H1 (cell line): ENCODE measurements at regions of chr4 and their contacts with region 1.

Region 1: GRCh38 chr4:142282870-142283431 is 563.1 kb downstream of the INPP4B start:
- DNase-seq: peak in 1 of 2 experiments; percentile 50
- H3K4me3 ChIP-seq: no peak overlapping the region
- H3K27ac ChIP-seq: no peak overlapping the region
- H3K4me1 ChIP-seq: no peaks in the 10 kb centered on the region
- H3K27me3 ChIP-seq: no peaks in the 10 kb centered on the region
- CTCF ChIP-seq: peak in 2 of 3 experiments; percentile 13 to 61; a peak in 2 of 4 replicates
- EP300 ChIP-seq: no peak
- POLR2A ChIP-seq: no peak
- RAD21 ChIP-seq: peak; percentile 61 to 66

Region 2: GRCh38 chr4:142142366-142143054 is 140.4 kb before region 1 on chr4:
- CTCF ChIA-PET with region 1: no interaction called
- POLR2A ChIA-PET with region 1: no interaction called
- DNase-seq: no peak
- H3K4me3 ChIP-seq: no peak overlapping the region
- H3K27ac ChIP-seq: no peak overlapping the region
- H3K4me1 ChIP-seq: no peaks in the 10 kb centered on the region
- H3K27me3 ChIP-seq: no peaks in the 10 kb centered on the region
- CTCF ChIP-seq: no peak
- EP300 ChIP-seq: no peak
- POLR2A ChIP-seq: no peak
- RAD21 ChIP-seq: no peak

Region 3: DNA sequence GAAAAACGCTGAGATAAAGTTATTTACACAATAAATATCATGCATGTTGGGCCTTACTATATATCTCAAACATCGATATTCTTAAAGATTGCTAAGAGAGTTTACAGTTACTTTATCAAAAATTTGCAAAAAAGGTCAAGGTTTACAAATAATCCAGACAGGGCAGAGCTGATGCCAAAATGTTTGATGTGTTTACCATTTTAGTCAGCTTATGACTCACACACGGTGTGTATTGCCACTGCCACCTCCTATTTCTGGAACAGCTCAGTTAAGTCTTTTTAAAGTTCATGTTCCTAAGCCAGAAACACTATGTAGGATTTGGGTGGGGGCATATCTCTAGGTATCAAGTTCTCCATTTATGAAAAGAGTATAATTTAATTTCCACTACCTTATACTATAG is 17.4 kb before region 1 on chr4:
- CTCF ChIA-PET with region 1: interaction called, 31 read pairs
- POLR2A ChIA-PET with region 1: no interaction called
- DNase-seq: no peak
- H3K4me3 ChIP-seq: no peak overlapping the region
- H3K27ac ChIP-seq: no peak overlapping the region
- H3K4me1 ChIP-seq: peaks cover 0 to 5% (median 2%) of the 10 kb centered on the region in 4 experiments; a peak in 4 of 7 replicates
- H3K27me3 ChIP-seq: no peaks in the 10 kb centered on the region
- CTCF ChIP-seq: no peak
- EP300 ChIP-seq: no peak
- POLR2A ChIP-seq: no peak
- RAD21 ChIP-seq: no peak

Region 4: GRCh38 chr4:142293536-142293935 is 10.6 kb after region 1 on chr4:
- CTCF ChIA-PET with region 1: interaction called, 30 read pairs
- POLR2A ChIA-PET with region 1: no interaction called
- DNase-seq: no peak
- H3K4me3 ChIP-seq: no peak overlapping the region
- H3K27ac ChIP-seq: no peak overlapping the region
- H3K4me1 ChIP-seq: peaks cover 0 to 4% (median 2%) of the 10 kb centered on the region in 4 experiments; a peak in 2 of 7 replicates
- H3K27me3 ChIP-seq: no peaks in the 10 kb centered on the region
- CTCF ChIP-seq: no peak
- EP300 ChIP-seq: no peak
- POLR2A ChIP-seq: no peak
- RAD21 ChIP-seq: no peak

Region 5: DNA sequence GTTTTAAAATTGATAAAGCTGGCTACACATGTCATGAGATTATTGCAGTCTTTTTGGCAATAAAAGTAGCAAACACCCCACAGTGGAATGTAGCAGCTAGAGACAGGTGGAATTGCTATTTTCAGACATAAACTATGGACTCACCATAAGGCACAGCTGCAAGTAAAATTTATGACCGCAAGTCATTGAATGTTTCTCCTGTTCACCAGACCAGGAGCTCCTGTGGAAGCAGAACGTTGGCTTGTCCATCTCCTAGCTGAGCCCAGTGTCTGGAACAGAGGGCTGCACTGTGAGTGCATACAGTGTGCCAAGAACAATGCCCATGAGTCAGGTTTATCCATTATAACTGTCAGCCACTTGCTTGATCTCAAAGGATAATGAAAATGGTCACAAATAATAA is 24.9 kb after region 1 on chr4:
- CTCF ChIA-PET with region 1: interaction called, 18 read pairs
- POLR2A ChIA-PET with region 1: no interaction called
- DNase-seq: no peak
- H3K4me3 ChIP-seq: no peak overlapping the region
- H3K27ac ChIP-seq: no peak overlapping the region
- H3K4me1 ChIP-seq: no peaks in the 10 kb centered on the region
- H3K27me3 ChIP-seq: no peaks in the 10 kb centered on the region
- CTCF ChIP-seq: no peak
- EP300 ChIP-seq: no peak
- POLR2A ChIP-seq: no peak
- RAD21 ChIP-seq: no peak

Region 6: DNA sequence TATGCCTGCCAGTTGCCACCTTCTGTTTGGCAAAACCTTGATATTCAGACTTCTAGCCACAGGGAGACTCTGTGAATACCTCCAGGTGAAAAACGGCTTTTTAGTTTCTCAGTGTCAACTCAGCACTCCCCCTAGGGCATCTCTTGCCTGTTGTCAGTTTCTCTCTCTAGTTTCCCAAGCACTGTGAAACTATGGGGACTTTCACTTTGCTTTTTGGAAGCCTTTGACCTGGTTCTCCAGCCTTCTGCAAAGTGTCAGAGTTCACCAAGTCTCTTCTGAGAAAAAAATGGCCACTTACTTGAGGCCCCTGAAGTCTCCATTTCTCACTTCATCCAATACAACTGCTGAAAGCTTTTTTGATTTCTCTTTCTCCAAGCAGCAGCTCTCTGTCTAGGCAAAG is 41.6 kb after region 1 on chr4:
- CTCF ChIA-PET with region 1: interaction called, 15 read pairs
- POLR2A ChIA-PET with region 1: no interaction called
- DNase-seq: no peak
- H3K4me3 ChIP-seq: no peak overlapping the region
- H3K27ac ChIP-seq: no peak overlapping the region
- H3K4me1 ChIP-seq: no peaks in the 10 kb centered on the region
- H3K27me3 ChIP-seq: no peaks in the 10 kb centered on the region
- CTCF ChIP-seq: no peak
- EP300 ChIP-seq: no peak
- POLR2A ChIP-seq: no peak
- RAD21 ChIP-seq: 0 out of 4 replicates have a peak, but pooled peaks of 1 of the 2 experiments have one; percentile 3

Region 7: GRCh38 chr4:142383800-142384635 is 101.1 kb after region 1 on chr4:
- CTCF ChIA-PET with region 1: no interaction called
- POLR2A ChIA-PET with region 1: no interaction called
- DNase-seq: no peak
- H3K4me3 ChIP-seq: no peak overlapping the region
- H3K27ac ChIP-seq: no peak overlapping the region
- H3K4me1 ChIP-seq: peaks cover 0 to 5% (median 0%) of the 10 kb centered on the region in 4 experiments; a peak in 1 of 7 replicates
- H3K27me3 ChIP-seq: no peaks in the 10 kb centered on the region
- CTCF ChIP-seq: no peak
- EP300 ChIP-seq: no peak
- POLR2A ChIP-seq: no peak
- RAD21 ChIP-seq: no peak